ENCODE measurements at regions of chr17 and their contacts with region 1.

Region 1: DNA sequence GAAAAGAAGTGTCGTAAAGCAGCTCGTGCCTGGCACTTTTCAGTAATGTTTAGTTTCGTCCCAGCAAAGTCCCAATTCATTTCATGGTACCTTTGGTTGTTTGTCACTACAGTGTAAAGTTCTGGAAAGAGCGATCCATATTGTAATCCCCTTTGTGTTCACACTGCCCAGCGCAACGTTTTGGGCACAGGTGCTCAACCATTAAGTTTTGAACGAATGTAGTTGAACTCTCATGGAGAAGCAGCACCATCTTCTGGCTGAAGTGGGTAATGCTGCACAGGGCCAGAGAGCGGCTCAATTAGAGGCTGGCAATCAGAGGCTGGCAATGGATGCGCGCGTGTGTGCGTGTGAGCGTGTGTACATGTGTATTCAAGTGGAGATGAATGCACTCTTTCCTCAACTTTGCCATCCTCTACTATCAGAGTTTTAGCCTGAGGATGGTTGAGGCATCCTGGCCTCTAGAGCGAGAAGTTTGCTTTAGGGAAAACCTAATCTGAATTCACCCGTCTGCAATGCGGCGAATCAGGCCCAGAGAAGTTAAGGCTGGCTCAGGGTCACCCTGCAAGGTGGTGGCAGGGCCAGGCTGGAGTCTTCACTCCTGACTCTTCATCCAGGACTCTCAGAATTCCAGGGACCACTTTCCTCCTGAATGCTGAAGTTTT is 29.9 kb downstream of the DYNLL2 start:
- DNase-seq: peak; percentile 81
- H3K4me3 Mint-ChIP-seq: no peak overlapping the region
- H3K27ac Mint-ChIP-seq: no peak overlapping the region
- H3K4me1 Mint-ChIP-seq: no peaks in the 10 kb centered on the region
- H3K27me3 Mint-ChIP-seq: peaks cover 16% of the 10 kb centered on the region
- CTCF ChIP-seq: peak; percentile 93

Region 2: DNA sequence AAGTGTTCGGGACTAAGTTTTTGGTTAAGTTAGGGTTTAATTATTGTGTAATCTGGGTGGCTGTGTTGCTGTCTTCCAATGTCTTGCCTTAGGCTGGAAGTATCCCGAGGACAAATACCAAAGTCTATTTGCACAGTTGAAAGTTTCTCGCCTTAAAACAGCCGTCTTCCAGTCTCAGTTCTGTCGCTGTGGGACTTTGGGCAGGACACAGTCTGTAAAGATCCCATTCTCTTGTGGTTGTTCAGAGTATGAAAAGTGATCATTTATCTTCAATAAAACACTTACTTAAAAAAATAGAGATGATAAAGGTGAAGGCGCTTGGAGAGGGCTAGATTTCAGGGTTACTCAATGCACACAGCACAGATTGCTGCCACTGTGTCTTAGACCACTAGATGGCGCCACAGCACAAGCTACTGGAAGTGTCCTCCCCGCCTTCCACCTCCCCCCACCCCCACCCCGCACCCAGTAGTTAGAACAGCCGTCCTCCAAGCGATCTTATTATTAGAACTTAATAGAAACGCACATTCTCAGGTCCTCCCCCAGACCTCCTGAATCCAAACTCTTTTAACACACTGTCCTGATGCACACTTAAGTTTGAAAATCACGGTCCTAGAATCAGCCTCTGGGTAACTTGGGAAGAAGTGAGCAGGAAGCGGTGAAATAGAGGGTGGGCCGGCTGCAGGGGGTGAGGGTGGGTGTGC is 982.2 kb before region 1 on chr17:
- CTCF ChIA-PET with region 1: no interaction called
- POLR2A ChIA-PET with region 1: interaction called, 4 read pairs
- intact Hi-C with region 1: loop called (anchors 10 kb)
- DNase-seq: peak; percentile 89
- H3K4me3 Mint-ChIP-seq: no peak overlapping the region
- H3K27ac Mint-ChIP-seq: no peak overlapping the region
- H3K4me1 Mint-ChIP-seq: peaks cover 5% of the 10 kb centered on the region
- H3K27me3 Mint-ChIP-seq: no peaks in the 10 kb centered on the region
- CTCF ChIP-seq: peak; percentile 85

Region 3: DNA sequence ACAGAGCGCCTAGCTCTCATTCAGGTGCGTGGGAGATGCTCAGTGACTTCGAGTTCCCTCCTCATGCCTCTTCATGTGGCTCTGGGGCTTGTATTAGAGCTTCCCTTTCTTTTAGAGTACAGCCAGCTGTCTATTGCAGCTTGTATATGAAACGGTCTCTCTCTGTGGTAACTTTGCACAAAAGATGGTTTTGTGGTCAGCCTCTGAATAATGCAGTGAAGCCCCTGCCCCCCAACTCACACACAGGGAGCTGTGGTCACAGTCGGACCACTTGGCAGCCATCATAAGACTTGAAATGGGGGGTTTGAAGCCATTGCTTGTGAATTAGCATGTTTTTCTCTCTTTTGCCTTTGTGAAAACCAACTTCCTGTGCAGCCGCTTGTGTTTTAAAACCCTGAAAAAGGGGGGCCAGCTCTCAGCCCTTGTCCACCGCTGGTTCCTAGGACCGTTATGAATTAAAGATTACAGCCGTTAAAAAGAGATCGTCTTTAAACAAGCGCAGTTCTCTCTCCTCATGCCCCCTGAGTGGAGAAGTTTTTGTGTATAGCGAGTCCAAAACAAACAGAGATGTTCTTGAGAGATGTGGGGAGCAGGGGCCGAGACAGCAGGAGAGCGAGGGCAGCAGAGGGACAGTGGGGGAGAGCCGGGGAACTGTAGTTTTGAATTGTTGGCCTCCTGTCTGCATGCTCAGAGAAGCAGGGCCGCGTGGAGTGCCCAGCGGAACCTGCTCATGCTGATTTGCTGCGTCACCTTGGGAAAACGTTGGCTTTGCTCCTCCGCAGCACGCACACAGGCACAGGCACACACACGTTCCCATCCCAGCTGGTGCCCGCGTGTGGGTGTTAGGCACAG is 657.8 kb before region 1 on chr17:
- CTCF ChIA-PET with region 1: no interaction called
- POLR2A ChIA-PET with region 1: no interaction called
- intact Hi-C with region 1: no loop called
- DNase-seq: no peak
- H3K4me3 Mint-ChIP-seq: no peak overlapping the region
- H3K27ac Mint-ChIP-seq: no peak overlapping the region
- H3K4me1 Mint-ChIP-seq: peaks cover 4% of the 10 kb centered on the region
- H3K27me3 Mint-ChIP-seq: no peaks in the 10 kb centered on the region
- CTCF ChIP-seq: no peak

Region 4: DNA sequence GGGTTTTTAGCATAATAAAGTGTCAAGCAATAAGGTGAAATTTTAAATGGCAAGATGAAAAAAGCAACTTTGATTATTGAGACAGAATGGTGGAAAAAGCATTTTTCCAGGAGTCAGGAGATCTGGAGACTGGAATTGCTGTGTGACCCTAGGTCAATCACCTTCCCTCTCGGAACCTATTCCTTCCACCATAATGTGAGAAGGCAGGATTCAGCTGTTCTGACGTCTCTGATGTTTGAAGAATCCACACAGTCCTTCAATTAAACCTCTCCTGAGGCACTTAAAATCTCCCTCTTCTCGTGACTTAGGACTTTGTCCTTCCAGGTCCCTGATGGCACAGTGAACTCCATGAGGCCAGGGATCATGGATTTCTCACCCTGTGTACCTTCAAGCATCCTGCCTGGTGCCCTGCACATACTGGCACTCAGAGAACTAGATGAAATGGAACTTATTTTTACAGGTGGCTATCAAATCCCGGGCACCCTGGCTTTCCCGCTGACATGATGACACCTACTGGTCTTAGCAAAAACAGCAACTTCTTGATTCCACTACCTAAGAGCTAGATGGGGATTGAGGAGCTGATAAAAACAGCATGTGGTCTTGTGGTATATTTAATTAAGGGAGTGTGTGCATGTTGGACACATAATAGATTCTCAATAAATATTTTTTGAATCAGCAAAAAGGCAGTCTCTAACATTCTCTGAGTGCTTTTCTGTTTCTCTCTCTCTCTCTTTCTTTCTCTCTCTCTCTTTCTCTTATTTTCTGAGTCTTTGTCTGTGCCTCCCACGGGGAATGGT is 365.7 kb before region 1 on chr17:
- CTCF ChIA-PET with region 1: interaction called, 3 read pairs
- POLR2A ChIA-PET with region 1: no interaction called
- intact Hi-C with region 1: loop called (anchors 5 kb)
- DNase-seq: peak; percentile 68
- H3K4me3 Mint-ChIP-seq: no peak overlapping the region
- H3K27ac Mint-ChIP-seq: no peak overlapping the region
- H3K4me1 Mint-ChIP-seq: no peaks in the 10 kb centered on the region
- H3K27me3 Mint-ChIP-seq: peaks cover 55% of the 10 kb centered on the region
- CTCF ChIP-seq: peak; percentile 77

Region 5: GRCh38 chr17:57861000-57861789 is 251.9 kb before region 1 on chr17:
- CTCF ChIA-PET with region 1: interaction called, 14 read pairs
- POLR2A ChIA-PET with region 1: no interaction called
- intact Hi-C with region 1: loop called (anchors 1 kb)
- DNase-seq: no peak
- H3K4me3 Mint-ChIP-seq: no peak overlapping the region
- H3K27ac Mint-ChIP-seq: no peak overlapping the region
- H3K4me1 Mint-ChIP-seq: peaks cover 14% of the 10 kb centered on the region
- H3K27me3 Mint-ChIP-seq: no peaks in the 10 kb centered on the region
- CTCF ChIP-seq: no peak

Region 6: GRCh38 chr17:58006924-58007780 is 105.9 kb before region 1 on chr17 and contains the start of gene SRSF1:
- CTCF ChIA-PET with region 1: interaction called, 6 read pairs
- POLR2A ChIA-PET with region 1: interaction called, 12 read pairs
- intact Hi-C with region 1: loop called (anchors 1 kb)
- DNase-seq: peak; percentile 97
- H3K4me3 Mint-ChIP-seq: peak within 1 kb of the TSS; percentile 99
- H3K27ac Mint-ChIP-seq: peak within 1 kb of the TSS; percentile 99
- H3K4me1 Mint-ChIP-seq: peaks cover 27% of the 10 kb centered on the region
- H3K27me3 Mint-ChIP-seq: no peaks in the 10 kb centered on the region
- CTCF ChIP-seq: no peak
- total RNA-seq, gene SRSF1: 381 and 493 TPM in 2 replicates

Measured in MCF 10A (cell line).